ENCODE measurements at regions of chr6 and their contacts with region 1.

Region 1: DNA sequence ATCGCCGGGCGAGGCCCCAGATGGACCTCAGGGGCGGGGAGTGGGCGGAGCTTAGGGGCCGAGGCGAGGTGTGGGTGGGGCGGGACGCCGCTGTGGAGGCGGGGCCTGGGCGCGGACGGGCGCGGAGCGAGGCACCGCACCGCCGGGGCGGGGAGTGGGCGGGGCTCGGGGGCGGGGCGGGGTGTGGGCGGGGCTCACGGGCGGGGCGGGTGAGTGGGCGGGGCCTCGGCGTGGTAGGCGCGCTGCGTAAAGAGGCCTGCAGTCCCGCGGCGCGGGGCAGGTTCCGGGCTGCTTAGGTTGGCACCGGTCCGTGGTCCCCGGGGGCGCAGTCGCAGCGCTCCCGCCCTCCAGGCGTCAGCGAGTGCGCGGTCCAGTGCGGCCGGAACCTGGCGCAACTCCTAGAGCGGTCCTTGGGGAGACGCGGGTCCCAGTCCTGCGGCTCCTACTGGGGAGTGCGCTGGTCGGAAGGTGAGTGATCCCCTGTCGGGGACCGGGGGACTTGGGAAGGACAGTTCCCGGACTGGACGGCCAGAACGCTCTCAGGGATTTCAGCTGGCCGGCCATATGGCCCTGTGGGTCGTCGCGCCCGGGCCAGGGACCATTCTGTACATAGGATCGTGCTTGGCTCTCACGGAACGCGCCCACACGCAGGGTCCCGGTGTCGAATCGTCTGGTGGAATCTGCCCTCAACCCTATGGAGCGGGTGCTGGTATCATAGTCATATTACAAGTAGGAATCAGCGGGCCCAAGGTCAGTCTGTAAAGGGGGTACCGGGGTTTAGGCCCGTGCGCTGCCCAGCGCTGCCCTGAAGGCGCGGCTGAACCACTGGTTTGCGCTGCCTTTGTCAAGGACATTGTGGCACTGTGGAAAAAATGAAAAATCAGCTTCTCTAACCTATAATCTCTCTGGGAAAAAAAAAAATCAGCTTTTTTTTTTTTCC is at the start of gene NQO2:
- DNase-seq: peak; percentile 94
- H3K4me3 Mint-ChIP-seq: peak within 1 kb of the TSS; percentile 88
- H3K27ac Mint-ChIP-seq: peak within 1 kb of the TSS; percentile 88
- H3K4me1 Mint-ChIP-seq: peaks cover 30% of the 10 kb centered on the region
- H3K27me3 Mint-ChIP-seq: no peaks in the 10 kb centered on the region
- total RNA-seq, gene NQO2: 36.1 to 38.9 TPM

Region 2: DNA sequence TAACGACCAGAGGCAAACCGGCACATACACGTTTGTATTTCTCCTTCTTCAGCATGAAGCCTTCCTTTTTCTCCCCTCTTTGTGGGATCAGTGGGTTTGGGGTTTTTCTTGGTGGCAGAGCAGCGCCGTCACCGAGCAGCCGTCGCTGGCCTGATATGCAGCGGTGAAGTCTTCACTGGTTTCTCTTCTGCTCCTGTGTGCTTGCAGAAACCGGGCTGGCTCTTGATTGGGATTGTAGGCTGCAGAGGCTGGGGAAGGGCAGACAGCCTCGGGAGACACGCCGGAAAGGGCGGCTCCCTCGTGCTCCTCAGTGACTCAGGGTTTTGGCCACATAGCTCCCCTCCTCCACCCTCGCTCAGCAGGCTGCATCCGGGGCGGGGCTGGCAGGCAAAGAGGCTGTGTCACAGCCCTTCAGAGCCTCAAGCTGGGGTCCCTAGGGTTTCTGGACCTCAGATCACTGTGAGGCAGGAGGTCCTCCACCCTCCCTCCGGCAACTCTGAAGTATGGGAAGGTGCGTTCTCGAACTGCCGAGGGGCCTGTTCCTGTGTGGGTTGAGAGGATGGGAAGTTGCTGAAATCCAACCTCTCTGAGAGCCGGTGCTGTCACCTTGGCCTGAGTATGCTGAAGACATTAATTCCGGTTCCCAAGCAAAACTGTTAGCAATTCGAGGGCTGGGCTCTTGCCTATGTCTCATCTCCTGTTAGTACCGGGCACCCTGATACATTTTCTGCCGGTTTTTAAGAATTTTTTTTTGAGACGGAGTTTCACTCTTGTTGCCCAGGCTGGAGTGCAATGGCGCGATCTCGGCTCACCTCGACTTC is 24.0 kb after region 1 on chr6:
- CTCF ChIA-PET with region 1: interaction called, 37 read pairs
- POLR2A ChIA-PET with region 1: interaction called, 6 read pairs
- intact Hi-C with region 1: loop called (anchors 1 kb)
- DNase-seq: peak; percentile 95
- H3K4me3 Mint-ChIP-seq: peak overlapping the region; percentile 96
- H3K27ac Mint-ChIP-seq: peak overlapping the region; percentile 98
- H3K4me1 Mint-ChIP-seq: peaks cover 66% of the 10 kb centered on the region
- H3K27me3 Mint-ChIP-seq: no peaks in the 10 kb centered on the region

Region 3: DNA sequence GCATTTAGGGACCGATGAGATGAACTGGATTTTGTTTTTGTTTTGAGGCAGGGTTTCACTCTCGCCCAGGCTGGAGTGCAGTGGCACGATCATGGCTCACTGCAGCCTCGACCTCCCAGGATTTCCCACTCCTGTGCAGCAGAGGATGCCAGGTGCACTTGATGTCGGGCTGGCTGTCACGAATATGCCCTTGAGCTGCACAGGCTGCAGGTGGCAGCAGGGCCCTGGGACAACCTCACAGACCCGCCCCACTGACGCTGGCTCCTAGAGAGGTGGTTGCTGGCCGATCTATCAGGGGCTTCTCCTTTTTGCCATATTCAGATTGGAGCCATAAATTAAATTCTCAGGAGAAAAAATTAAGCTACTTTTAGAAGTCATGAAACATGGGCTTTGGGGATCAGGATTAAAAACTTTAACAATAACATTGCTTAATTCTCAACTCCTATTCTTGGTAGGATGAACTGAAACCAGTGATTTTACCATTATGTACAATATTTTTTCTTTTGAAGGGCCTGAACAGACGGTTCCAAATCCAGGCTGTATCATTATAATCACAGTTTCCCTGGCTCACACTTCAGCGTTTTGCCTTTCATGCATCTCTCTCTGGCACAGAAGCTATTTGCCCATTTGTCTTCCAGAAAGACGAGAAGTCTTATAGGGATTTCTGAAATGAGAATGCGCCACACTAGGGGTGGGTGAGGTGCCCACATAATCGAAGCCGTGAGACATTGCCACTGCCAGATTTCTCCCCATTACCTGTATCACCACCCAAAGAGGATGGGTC is 32.2 kb after region 1 on chr6:
- CTCF ChIA-PET with region 1: interaction called, 37 read pairs
- POLR2A ChIA-PET with region 1: interaction called, 6 read pairs
- intact Hi-C with region 1: loop called (anchors 2 kb)
- DNase-seq: peak; percentile 39
- H3K4me3 Mint-ChIP-seq: no peak overlapping the region
- H3K27ac Mint-ChIP-seq: no peak overlapping the region
- H3K4me1 Mint-ChIP-seq: peaks cover 10% of the 10 kb centered on the region
- H3K27me3 Mint-ChIP-seq: no peaks in the 10 kb centered on the region

Region 4: GRCh38 chr6:3052481-3053230 is 52.8 kb after region 1 on chr6:
- CTCF ChIA-PET with region 1: interaction called, 28 read pairs
- POLR2A ChIA-PET with region 1: interaction called, 5 read pairs
- intact Hi-C with region 1: loop called (anchors 1 kb)
- DNase-seq: no peak
- H3K4me3 Mint-ChIP-seq: peak overlapping the region; percentile 70
- H3K27ac Mint-ChIP-seq: no peak overlapping the region
- H3K4me1 Mint-ChIP-seq: peaks cover 10% of the 10 kb centered on the region
- H3K27me3 Mint-ChIP-seq: no peaks in the 10 kb centered on the region

Region 5: GRCh38 chr6:3068329-3069214 is 68.7 kb after region 1 on chr6 and contains the start of gene RIPK1:
- CTCF ChIA-PET with region 1: interaction called, 13 read pairs
- POLR2A ChIA-PET with region 1: interaction called, 8 read pairs
- intact Hi-C with region 1: no loop called
- DNase-seq: peak; percentile 96
- H3K4me3 Mint-ChIP-seq: peak within 1 kb of the TSS; percentile 96
- H3K27ac Mint-ChIP-seq: peak within 1 kb of the TSS; percentile 98
- H3K4me1 Mint-ChIP-seq: peaks cover 62% of the 10 kb centered on the region
- H3K27me3 Mint-ChIP-seq: no peaks in the 10 kb centered on the region
- total RNA-seq, gene RIPK1: 18.5 to 18.6 TPM

Region 6: GRCh38 chr6:3194535-3195419 is 194.9 kb after region 1 on chr6:
- CTCF ChIA-PET with region 1: no interaction called
- POLR2A ChIA-PET with region 1: no interaction called
- intact Hi-C with region 1: no loop called
- DNase-seq: peak; percentile 51
- H3K4me3 Mint-ChIP-seq: no peak overlapping the region
- H3K27ac Mint-ChIP-seq: no peak overlapping the region
- H3K4me1 Mint-ChIP-seq: no peaks in the 10 kb centered on the region
- H3K27me3 Mint-ChIP-seq: peaks cover 4% of the 10 kb centered on the region

Region 7: GRCh38 chr6:3258720-3259490 is 259.0 kb after region 1 on chr6 and contains the start of gene PSMG4:
- CTCF ChIA-PET with region 1: no interaction called
- POLR2A ChIA-PET with region 1: no interaction called
- intact Hi-C with region 1: loop called (anchors 1 kb)
- DNase-seq: peak; percentile 96
- H3K4me3 Mint-ChIP-seq: peak within 1 kb of the TSS; percentile 92
- H3K27ac Mint-ChIP-seq: peak within 1 kb of the TSS; percentile 84
- H3K4me1 Mint-ChIP-seq: peaks cover 32% of the 10 kb centered on the region
- H3K27me3 Mint-ChIP-seq: no peaks in the 10 kb centered on the region
- total RNA-seq, gene PSMG4: 24.2 to 25.2 TPM

Measured in activated CD4-positive, alpha-beta memory T cell treated with anti-CD3 and anti-CD28 coated beads for 36 hours (primary cell).